CD4-positive, alpha-beta memory T cell (primary cell): ENCODE measurements at regions of chr4 and their contacts with region 1.

Region 1: GRCh38 chr4:77433418-77433733 is 172.2 kb upstream of the CXCL13 start:
- DNase-seq: peak in 4 of 5 donors; percentile 25 to 34 (median 30)
- H3K4me3 ChIP-seq: no peak overlapping the region
- H3K4me3 Mint-ChIP-seq: no peak overlapping the region
- H3K27ac ChIP-seq: no peak overlapping the region
- H3K27ac Mint-ChIP-seq: no peak overlapping the region
- H3K4me1 ChIP-seq: peaks cover 3% of the 10 kb centered on the region
- H3K4me1 Mint-ChIP-seq: peaks cover 0 to 11% (median 5%) of the 10 kb centered on the region in 4 donors
- H3K27me3 ChIP-seq: no peaks in the 10 kb centered on the region
- H3K27me3 Mint-ChIP-seq: no peaks in the 10 kb centered on the region

Region 2: GRCh38 chr4:76511947-76512346 is 921.4 kb before region 1 on chr4:
- CTCF ChIA-PET with region 1: no interaction called
- POLR2A ChIA-PET with region 1: no interaction called
- intact Hi-C with region 1: loop called (anchors 5 kb)
- DNase-seq: no peak
- H3K4me3 ChIP-seq: no peak overlapping the region
- H3K4me3 Mint-ChIP-seq: no peak overlapping the region
- H3K27ac ChIP-seq: no peak overlapping the region
- H3K27ac Mint-ChIP-seq: no peak overlapping the region
- H3K4me1 ChIP-seq: no peaks in the 10 kb centered on the region
- H3K4me1 Mint-ChIP-seq: no peaks in the 10 kb centered on the region
- H3K27me3 ChIP-seq: no peaks in the 10 kb centered on the region
- H3K27me3 Mint-ChIP-seq: no peaks in the 10 kb centered on the region

Region 3: GRCh38 chr4:77220828-77221613 is 212.4 kb before region 1 on chr4:
- CTCF ChIA-PET with region 1: no interaction called
- POLR2A ChIA-PET with region 1: no interaction called
- intact Hi-C with region 1: no loop called
- DNase-seq: no peak
- H3K4me3 ChIP-seq: no peak overlapping the region
- H3K4me3 Mint-ChIP-seq: no peak overlapping the region
- H3K27ac ChIP-seq: no peak overlapping the region
- H3K27ac Mint-ChIP-seq: no peak overlapping the region
- H3K4me1 ChIP-seq: no peaks in the 10 kb centered on the region
- H3K4me1 Mint-ChIP-seq: no peaks in the 10 kb centered on the region
- H3K27me3 ChIP-seq: no peaks in the 10 kb centered on the region
- H3K27me3 Mint-ChIP-seq: peaks cover 9 to 12% of the 10 kb centered on the region in 2 donors

Region 4: GRCh38 chr4:77950203-77950602 is 516.8 kb after region 1 on chr4:
- CTCF ChIA-PET with region 1: no interaction called
- POLR2A ChIA-PET with region 1: no interaction called
- intact Hi-C with region 1: no loop called
- DNase-seq: no peak
- H3K4me3 ChIP-seq: no peak overlapping the region
- H3K4me3 Mint-ChIP-seq: no peak overlapping the region
- H3K27ac ChIP-seq: no peak overlapping the region
- H3K27ac Mint-ChIP-seq: peak overlapping the region in 1 of 7 donors; percentile 4
- H3K4me1 ChIP-seq: no peaks in the 10 kb centered on the region
- H3K4me1 Mint-ChIP-seq: peaks cover 0 to 5% (median 0%) of the 10 kb centered on the region in 4 donors
- H3K27me3 ChIP-seq: no peaks in the 10 kb centered on the region
- H3K27me3 Mint-ChIP-seq: no peaks in the 10 kb centered on the region